ENCODE measurements at regions of chr11 and their contacts with region 1.

Region 1: GRCh38 chr11:75270896-75271418 is 30.4 kb downstream of the TPBGL start:
- DNase-seq: no peak

Region 2: DNA sequence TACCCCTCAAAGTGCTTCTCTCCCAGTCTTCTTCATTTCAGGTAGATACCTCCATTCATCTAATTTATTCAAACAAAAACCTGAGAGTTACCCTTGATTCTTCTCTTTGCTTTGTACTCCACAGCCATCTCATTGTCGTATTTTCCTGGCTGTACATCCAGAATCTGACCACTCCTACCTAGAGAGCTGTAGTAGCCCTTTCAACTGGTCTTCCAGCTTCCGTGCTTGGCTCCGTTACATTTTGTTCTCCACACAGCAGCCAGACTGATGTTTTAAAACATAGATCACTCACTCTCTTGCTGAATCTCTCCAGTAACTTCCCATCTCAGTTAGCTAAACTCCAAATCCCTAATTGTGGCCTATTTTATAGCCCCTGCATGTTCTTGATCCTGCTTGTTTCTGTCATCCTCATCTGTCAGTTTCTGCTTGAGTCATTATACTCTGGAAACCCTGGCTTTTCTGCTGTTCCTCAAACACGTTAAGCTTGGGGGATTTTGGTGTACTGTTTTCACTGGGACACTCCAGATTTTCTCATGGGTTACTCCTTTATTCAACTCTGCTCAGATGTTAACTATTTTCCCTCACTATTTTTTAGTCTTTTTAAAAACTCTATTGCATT is 314.5 kb before region 1 on chr11:
- in situ Hi-C with region 1: no loop called
- DNase-seq: no peak

Region 3: GRCh38 chr11:75384438-75385080 is 113.6 kb after region 1 on chr11:
- in situ Hi-C with region 1: no loop called
- DNase-seq: peak; percentile 81

Region 4: GRCh38 chr11:75399344-75400145 is 128.6 kb after region 1 on chr11 and contains the start of gene RPS3:
- in situ Hi-C with region 1: loop called (anchors 10 kb)
- DNase-seq: peak; percentile 96

Measured in KBM-7 (cell line).